B cell (primary cell): ENCODE measurements at regions of chr6 and their contacts with region 1.

Region 1: GRCh38 chr6:5085193-5085647 is at the start of gene PPP1R3G:
- DNase-seq: no peak
- ATAC-seq: peak; percentile 32
- H3K4me3 ChIP-seq: peak within 1 kb of the TSS in 4 of 5 experiments; percentile 40 to 77 (median 58)
- H3K4me3 Mint-ChIP-seq: peak within 1 kb of the TSS; percentile 88
- H3K27ac ChIP-seq: no peak within 1 kb of the TSS
- H3K27ac Mint-ChIP-seq: peak within 1 kb of the TSS; percentile 47
- H3K4me1 ChIP-seq: peaks cover 22 to 32% of the 10 kb centered on the region in 2 donors
- H3K4me1 Mint-ChIP-seq: peaks cover 22% of the 10 kb centered on the region
- H3K27me3 ChIP-seq: peaks cover 0 to 42% (median 10%) of the 10 kb centered on the region in 4 experiments
- H3K27me3 Mint-ChIP-seq: peaks cover 20% of the 10 kb centered on the region
- CTCF ChIP-seq: no peak
- total RNA-seq, gene PPP1R3G: 0.24 and 0.25 TPM in 2 replicates

Region 2: DNA sequence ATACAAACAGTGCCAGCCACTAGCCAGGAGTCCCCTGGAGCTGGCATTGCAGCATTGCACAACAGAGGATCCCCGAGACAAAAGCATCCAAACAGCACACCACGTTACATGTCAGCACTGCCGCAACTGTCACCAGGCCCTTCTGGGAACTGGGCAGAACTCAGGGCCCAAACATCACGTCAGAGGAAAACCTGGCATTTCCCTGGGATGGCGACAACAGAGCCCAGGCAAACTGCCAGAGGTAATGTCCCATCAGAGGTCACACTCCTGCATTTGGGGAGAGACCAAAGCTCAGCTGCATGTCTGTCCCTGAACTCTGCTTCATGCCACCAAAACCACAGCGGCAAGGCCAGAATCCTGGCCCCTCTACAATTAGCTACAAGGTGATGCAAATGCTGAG is 36.3 kb after region 1 on chr6:
- CTCF ChIA-PET with region 1: no interaction called
- POLR2A ChIA-PET with region 1: no interaction called
- intact Hi-C with region 1: no loop called
- DNase-seq: no peak
- ATAC-seq: no peak
- H3K4me3 ChIP-seq: no peak overlapping the region
- H3K4me3 Mint-ChIP-seq: no peak overlapping the region
- H3K27ac ChIP-seq: no peak overlapping the region
- H3K27ac Mint-ChIP-seq: no peak overlapping the region
- H3K4me1 ChIP-seq: no peaks in the 10 kb centered on the region
- H3K4me1 Mint-ChIP-seq: no peaks in the 10 kb centered on the region
- H3K27me3 ChIP-seq: no peaks in the 10 kb centered on the region
- H3K27me3 Mint-ChIP-seq: no peaks in the 10 kb centered on the region
- CTCF ChIP-seq: no peak

Region 3: GRCh38 chr6:5135788-5136376 is 50.7 kb after region 1 on chr6:
- CTCF ChIA-PET with region 1: no interaction called
- POLR2A ChIA-PET with region 1: interaction called, 4 read pairs
- intact Hi-C with region 1: loop called (anchors 10 kb)
- DNase-seq: peak; percentile 69
- ATAC-seq: peak; percentile 36
- H3K4me3 ChIP-seq: no peak overlapping the region
- H3K4me3 Mint-ChIP-seq: no peak overlapping the region
- H3K27ac ChIP-seq: no peak overlapping the region
- H3K27ac Mint-ChIP-seq: peak overlapping the region; percentile 1
- H3K4me1 ChIP-seq: peaks cover 31 to 47% of the 10 kb centered on the region in 2 donors
- H3K4me1 Mint-ChIP-seq: peaks cover 63% of the 10 kb centered on the region
- H3K27me3 ChIP-seq: no peaks in the 10 kb centered on the region
- H3K27me3 Mint-ChIP-seq: no peaks in the 10 kb centered on the region
- CTCF ChIP-seq: peak; percentile 80